ENCODE measurements at regions of chr2 and their contacts with region 1.

Region 1: GRCh38 chr2:231925303-231926179 is 655 bp downstream of the NPPC start:
- DNase-seq: no peak
- ATAC-seq: peak; percentile 92
- H3K4me3 ChIP-seq: peak overlapping the region; percentile 74; the same call in 1 of the 2 replicates
- H3K27ac ChIP-seq: no peak overlapping the region
- H3K4me1 ChIP-seq: peaks cover 13% of the 10 kb centered on the region
- H3K27me3 ChIP-seq: peaks cover 6 to 11% of the 10 kb centered on the region in 2 experiments; a peak in 3 of 4 replicates
- CTCF ChIP-seq: peak; percentile 70 to 75 (median 70)
- EP300 ChIP-seq: no peak
- POLR2A ChIP-seq: no peak
- RAD21 ChIP-seq: peak; percentile 64

Region 2: DNA sequence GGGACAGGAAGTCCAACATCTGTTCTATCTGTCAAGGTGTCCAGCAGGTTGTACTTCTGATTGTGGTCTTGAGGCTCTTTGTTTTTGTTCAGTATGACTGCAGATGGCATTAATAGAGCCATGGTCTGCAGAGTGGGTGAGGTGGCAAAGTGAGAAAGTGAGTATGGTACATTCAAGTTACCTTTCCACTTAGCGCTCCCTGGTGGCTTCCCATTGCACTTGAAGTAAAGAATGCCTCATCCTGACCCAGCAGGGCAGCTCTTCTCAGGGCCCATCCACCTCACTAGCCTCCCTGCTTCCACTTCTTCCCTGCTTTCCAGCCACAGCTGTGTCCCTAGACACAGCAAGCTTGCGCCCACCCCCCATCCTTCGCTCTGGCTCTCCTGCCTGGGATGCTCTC is 305.0 kb after region 1 on chr2:
- CTCF ChIA-PET with region 1: interaction called, 5 read pairs
- POLR2A ChIA-PET with region 1: no interaction called
- RAD21 ChIA-PET with region 1: no interaction called
- SMC1A ChIA-PET with region 1: interaction called, 3 read pairs
- in situ Hi-C with region 1: no loop called
- intact Hi-C with region 1: loop called (anchors 1 kb)
- DNase-seq: no peak
- ATAC-seq: peak; percentile 78
- H3K4me3 ChIP-seq: no peak overlapping the region
- H3K27ac ChIP-seq: no peak overlapping the region
- H3K4me1 ChIP-seq: peaks cover 3% of the 10 kb centered on the region
- H3K27me3 ChIP-seq: no peaks in the 10 kb centered on the region
- CTCF ChIP-seq: peak; percentile 11 to 31 (median 20); a peak in 4 of 6 replicates
- EP300 ChIP-seq: no peak
- POLR2A ChIP-seq: no peak
- RAD21 ChIP-seq: 0 out of 2 replicates have a peak, but pooled peaks have one; percentile 33

Region 3: GRCh38 chr2:232327105-232328041 is 401.8 kb after region 1 on chr2:
- CTCF ChIA-PET with region 1: interaction called, 9 read pairs
- POLR2A ChIA-PET with region 1: no interaction called
- RAD21 ChIA-PET with region 1: interaction called, 3 read pairs
- SMC1A ChIA-PET with region 1: interaction called, 4 read pairs
- in situ Hi-C with region 1: no loop called
- intact Hi-C with region 1: loop called (anchors 1 kb)
- DNase-seq: no peak
- ATAC-seq: peak; percentile 90
- H3K4me3 ChIP-seq: no peak overlapping the region
- H3K27ac ChIP-seq: no peak overlapping the region
- H3K4me1 ChIP-seq: peaks cover 10% of the 10 kb centered on the region
- H3K27me3 ChIP-seq: no peaks in the 10 kb centered on the region
- CTCF ChIP-seq: peak; percentile 61 to 84 (median 81)
- EP300 ChIP-seq: no peak
- POLR2A ChIP-seq: no peak
- RAD21 ChIP-seq: peak; percentile 81

Measured in GM12878 (cell line).